Endothelial cell of umbilical vein (primary cell): ENCODE measurements at regions of chr11 and their contacts with region 1.

Region 1: GRCh38 chr11:23112987-23113886 is 253.0 kb upstream of the CCDC179 start:
- DNase-seq: peak; percentile 73
- H3K4me3 ChIP-seq: no peak overlapping the region
- H3K27ac ChIP-seq: no peak overlapping the region
- H3K4me1 ChIP-seq: peaks cover 3% of the 10 kb centered on the region
- H3K27me3 ChIP-seq: no peaks in the 10 kb centered on the region
- CTCF ChIP-seq: peak; percentile 56 to 62
- POLR2A ChIP-seq: no peak

Region 2: DNA sequence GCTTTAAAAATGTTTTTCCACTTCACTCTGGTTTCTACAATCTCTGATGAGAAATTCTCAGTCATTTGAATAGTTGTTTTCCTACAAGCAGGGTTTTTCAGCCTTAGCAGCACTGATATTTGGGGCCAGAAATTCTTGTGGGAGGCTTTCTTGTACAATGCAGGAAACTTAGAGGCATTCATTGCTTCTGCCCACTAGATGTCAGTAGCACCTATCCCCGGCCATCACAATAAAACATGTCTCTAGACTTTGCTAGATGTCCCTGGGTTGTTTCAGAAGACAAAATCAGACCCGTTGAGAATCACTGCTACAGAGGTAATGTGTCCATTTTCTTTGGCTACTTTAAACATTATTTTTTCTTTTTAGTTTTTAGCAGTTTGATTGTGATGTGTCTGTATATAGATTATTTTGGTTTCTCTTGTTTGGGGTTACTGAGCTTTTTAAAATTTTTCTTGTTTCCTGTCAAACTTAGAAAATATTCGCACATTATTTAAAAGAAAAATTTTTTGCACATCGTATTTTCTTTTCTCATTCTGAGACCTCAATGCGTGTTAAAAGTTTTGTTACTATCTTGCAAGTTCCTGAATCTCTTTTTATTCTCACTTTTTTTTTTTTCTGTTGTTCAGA is 192.2 kb before region 1 on chr11:
- CTCF ChIA-PET with region 1: interaction called, 3 read pairs
- POLR2A ChIA-PET with region 1: no interaction called
- dilution Hi-C with region 1: no loop called
- intact Hi-C with region 1: loop called (anchors 2 kb)
- DNase-seq: peak; percentile 65
- H3K4me3 ChIP-seq: no peak overlapping the region
- H3K27ac ChIP-seq: no peak overlapping the region
- H3K4me1 ChIP-seq: peaks cover 6% of the 10 kb centered on the region
- H3K27me3 ChIP-seq: no peaks in the 10 kb centered on the region
- CTCF ChIP-seq: peak; percentile 74 to 84
- POLR2A ChIP-seq: no peak

Region 3: DNA sequence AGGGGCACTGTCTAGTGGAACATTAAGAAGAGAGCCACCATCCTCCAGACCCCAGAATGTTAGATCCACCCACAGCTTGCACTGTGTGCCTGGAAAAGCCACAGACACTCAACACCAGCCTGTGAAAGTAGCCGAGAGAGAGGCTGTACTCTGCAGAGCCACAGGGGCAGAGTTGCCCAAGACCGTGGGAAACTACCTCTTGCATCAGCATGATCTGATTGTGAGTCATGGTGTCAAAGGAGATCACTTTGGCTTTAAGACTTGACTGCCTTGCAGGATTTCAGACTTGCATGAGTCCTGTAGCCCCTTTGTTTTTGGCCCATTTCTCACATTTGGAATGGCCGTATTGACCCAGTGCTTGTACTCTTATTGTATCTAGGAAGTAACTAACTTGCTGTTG is 137.1 kb before region 1 on chr11:
- CTCF ChIA-PET with region 1: no interaction called
- POLR2A ChIA-PET with region 1: no interaction called
- dilution Hi-C with region 1: no loop called
- intact Hi-C with region 1: no loop called
- DNase-seq: no peak
- H3K4me3 ChIP-seq: no peak overlapping the region
- H3K27ac ChIP-seq: no peak overlapping the region
- H3K4me1 ChIP-seq: no peaks in the 10 kb centered on the region
- H3K27me3 ChIP-seq: no peaks in the 10 kb centered on the region
- CTCF ChIP-seq: no peak
- POLR2A ChIP-seq: no peak

Region 4: DNA sequence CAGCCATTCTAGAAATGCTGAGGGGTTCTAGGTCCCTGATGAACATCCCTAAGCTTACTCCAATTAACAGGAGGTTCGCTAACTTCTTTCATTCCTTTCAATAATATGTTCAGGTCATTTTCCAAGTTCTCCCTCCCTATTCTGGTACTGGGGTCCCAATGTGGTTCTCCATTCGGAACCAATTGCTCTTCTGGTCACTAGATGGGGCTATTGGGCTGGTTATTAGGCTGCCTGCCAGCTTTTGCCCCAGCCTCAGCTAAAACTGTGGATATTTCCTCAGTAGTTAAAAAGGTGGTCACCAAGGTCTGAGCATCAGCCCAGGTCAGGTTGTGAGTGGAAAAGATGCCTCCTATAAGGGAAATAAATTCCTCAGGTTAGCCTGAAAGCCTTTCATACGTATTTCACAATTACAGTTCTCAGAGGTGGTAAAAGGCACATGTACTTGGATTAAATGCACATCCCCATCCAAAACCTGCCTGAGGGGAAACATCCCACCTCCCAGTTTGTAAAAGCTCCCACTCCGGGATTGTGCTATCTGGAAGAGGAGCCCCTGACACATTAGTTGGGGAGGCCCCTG is 91.9 kb before region 1 on chr11:
- CTCF ChIA-PET with region 1: interaction called, 11 read pairs
- POLR2A ChIA-PET with region 1: no interaction called
- dilution Hi-C with region 1: no loop called
- intact Hi-C with region 1: loop called (anchors 5 kb)
- DNase-seq: peak; percentile 33
- H3K4me3 ChIP-seq: no peak overlapping the region
- H3K27ac ChIP-seq: no peak overlapping the region
- H3K4me1 ChIP-seq: no peaks in the 10 kb centered on the region
- H3K27me3 ChIP-seq: no peaks in the 10 kb centered on the region
- CTCF ChIP-seq: peak; percentile 60 to 66
- POLR2A ChIP-seq: no peak

Region 5: DNA sequence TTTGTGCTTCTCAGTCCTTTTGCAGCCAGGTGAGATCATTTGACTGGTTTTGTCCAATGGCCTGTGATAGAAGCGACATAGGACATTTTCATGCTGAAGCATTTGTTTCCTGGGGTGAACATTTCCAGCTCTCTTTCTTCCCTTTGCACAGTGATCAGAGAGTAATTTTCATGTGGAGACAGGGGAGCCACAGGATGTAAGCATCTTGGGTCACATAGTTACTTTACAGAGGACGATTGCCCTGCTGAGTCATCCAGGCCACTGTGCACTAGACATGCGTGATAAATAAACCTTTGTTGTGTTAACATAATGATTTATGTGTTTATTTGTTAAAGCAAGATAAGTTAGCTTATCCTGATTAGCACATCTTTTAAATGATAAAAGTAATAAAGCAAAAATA is 10.5 kb after region 1 on chr11:
- CTCF ChIA-PET with region 1: interaction called, 14 read pairs
- POLR2A ChIA-PET with region 1: no interaction called
- dilution Hi-C with region 1: no loop called
- intact Hi-C with region 1: no loop called
- DNase-seq: peak; percentile 69
- H3K4me3 ChIP-seq: no peak overlapping the region
- H3K27ac ChIP-seq: peak overlapping the region; percentile 40
- H3K4me1 ChIP-seq: peaks cover 15% of the 10 kb centered on the region
- H3K27me3 ChIP-seq: no peaks in the 10 kb centered on the region
- CTCF ChIP-seq: no peak
- POLR2A ChIP-seq: no peak

Region 6: DNA sequence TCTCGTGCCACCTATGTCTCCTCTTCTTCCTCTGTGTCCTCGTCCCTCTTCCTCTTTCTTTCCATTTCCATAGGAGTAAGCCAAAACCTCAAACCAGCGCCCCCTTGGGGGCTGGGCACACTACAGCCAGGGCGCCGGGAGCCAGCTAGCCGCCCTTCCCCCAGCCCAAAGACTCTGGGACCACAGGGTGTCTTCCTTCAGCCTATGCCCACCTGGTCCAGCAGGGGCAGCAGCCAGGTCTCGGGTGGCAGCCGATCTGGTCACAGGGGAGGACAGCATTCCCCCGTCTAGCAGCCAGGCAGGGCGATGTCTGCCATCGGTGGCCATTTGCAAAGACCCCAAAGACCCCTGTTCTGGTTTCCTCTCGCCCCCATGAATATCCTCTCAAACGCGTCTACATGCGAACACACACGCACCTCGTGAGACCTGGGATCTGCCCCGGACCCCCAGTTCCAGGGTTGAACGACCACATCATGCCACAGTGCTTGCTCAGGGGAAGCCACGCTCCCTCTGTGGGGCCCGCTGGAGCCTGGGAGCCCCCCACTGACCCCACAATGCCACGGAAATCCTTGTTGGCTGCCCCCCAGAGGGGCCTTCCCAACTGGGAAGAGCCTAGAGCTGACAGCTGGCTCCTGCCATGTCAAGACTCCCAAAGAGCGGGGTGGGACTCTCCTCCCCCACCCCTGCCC is 293.0 kb after region 1 on chr11:
- CTCF ChIA-PET with region 1: no interaction called
- POLR2A ChIA-PET with region 1: no interaction called
- dilution Hi-C with region 1: no loop called
- intact Hi-C with region 1: no loop called
- DNase-seq: no peak
- H3K4me3 ChIP-seq: no peak overlapping the region
- H3K27ac ChIP-seq: no peak overlapping the region
- H3K4me1 ChIP-seq: no peaks in the 10 kb centered on the region
- H3K27me3 ChIP-seq: no peaks in the 10 kb centered on the region
- CTCF ChIP-seq: no peak
- POLR2A ChIP-seq: no peak

Region 7: DNA sequence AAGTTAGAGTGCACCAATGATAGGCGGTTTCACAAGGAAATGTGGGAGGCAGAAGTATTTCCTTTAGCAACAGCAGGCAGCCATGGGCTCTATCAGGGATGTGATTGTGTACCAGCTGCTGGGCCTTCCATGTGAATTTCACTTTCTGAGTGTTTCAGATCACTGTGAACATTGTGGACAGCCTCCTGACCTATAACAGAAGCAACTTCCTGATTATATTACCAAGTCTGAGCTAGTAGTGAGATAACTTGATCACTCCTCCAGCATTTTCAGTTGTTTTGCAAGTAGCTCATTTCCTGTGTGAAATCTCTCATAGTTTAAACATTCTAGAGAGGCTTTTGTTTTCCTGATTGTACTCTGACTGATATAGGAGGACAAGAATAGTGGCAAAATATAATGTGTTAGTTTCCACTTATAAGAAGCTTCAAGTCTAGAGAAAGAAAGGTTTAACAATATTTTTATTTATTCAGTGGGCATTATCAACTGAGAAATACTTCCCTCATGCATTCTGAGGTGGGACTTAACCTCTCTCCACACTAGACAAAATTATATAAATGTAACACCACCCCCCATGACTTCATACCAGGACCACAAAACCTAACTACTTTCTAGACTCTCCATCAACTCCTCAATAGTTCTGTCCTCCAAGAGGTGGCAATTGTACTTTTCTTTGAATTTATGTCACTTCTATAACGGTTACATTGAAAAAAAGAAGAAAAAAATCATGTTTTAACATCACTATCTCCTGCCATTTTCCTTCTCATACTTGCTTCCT is 1199.4 kb after region 1 on chr11:
- CTCF ChIA-PET with region 1: interaction called, 3 read pairs
- POLR2A ChIA-PET with region 1: no interaction called
- dilution Hi-C with region 1: no loop called
- intact Hi-C with region 1: loop called (anchors 10 kb)
- DNase-seq: peak; percentile 96
- H3K4me3 ChIP-seq: no peak overlapping the region
- H3K27ac ChIP-seq: peak overlapping the region; percentile 61
- H3K4me1 ChIP-seq: peaks cover 17% of the 10 kb centered on the region
- H3K27me3 ChIP-seq: no peaks in the 10 kb centered on the region
- CTCF ChIP-seq: no peak
- POLR2A ChIP-seq: peak; percentile 57

Region 8: GRCh38 chr11:24324211-24324610 is 1211.0 kb after region 1 on chr11:
- CTCF ChIA-PET with region 1: interaction called, 30 read pairs
- POLR2A ChIA-PET with region 1: no interaction called
- dilution Hi-C with region 1: no loop called
- intact Hi-C with region 1: loop called (anchors 10 kb)
- DNase-seq: peak; percentile 55
- H3K4me3 ChIP-seq: no peak overlapping the region
- H3K27ac ChIP-seq: no peak overlapping the region
- H3K4me1 ChIP-seq: peaks cover 7% of the 10 kb centered on the region
- H3K27me3 ChIP-seq: no peaks in the 10 kb centered on the region
- CTCF ChIP-seq: no peak
- POLR2A ChIP-seq: no peak

Region 9: GRCh38 chr11:24386546-24387397 is 1273.5 kb after region 1 on chr11:
- CTCF ChIA-PET with region 1: interaction called, 64 read pairs
- POLR2A ChIA-PET with region 1: no interaction called
- dilution Hi-C with region 1: no loop called
- intact Hi-C with region 1: loop called (anchors 1 kb)
- DNase-seq: peak; percentile 38
- H3K4me3 ChIP-seq: no peak overlapping the region
- H3K27ac ChIP-seq: no peak overlapping the region
- H3K4me1 ChIP-seq: no peaks in the 10 kb centered on the region
- H3K27me3 ChIP-seq: no peaks in the 10 kb centered on the region
- CTCF ChIP-seq: peak; percentile 18 to 30
- POLR2A ChIP-seq: no peak